Activated CD4-positive, alpha-beta T cell treated with anti-CD3 and anti-CD28 coated beads, Interleukin-2, amount 10 ng/mL, durations not matched to agents 7 days and 5 days (primary cell): ENCODE measurements at regions of chr9 and their contacts with region 1.

Region 1: GRCh38 chr9:5596173-5596572 is 32.7 kb upstream of the RIC1 start:
- DNase-seq: no peak
- H3K4me3 Mint-ChIP-seq: no peak overlapping the region
- H3K27ac Mint-ChIP-seq: no peak overlapping the region
- H3K4me1 Mint-ChIP-seq: peaks cover 24% of the 10 kb centered on the region
- H3K27me3 Mint-ChIP-seq: no peaks in the 10 kb centered on the region

Region 2: GRCh38 chr9:5582835-5583195 is 13.4 kb before region 1 on chr9:
- CTCF ChIA-PET with region 1: interaction called, 11 read pairs
- POLR2A ChIA-PET with region 1: no interaction called
- DNase-seq: peak; percentile 71
- H3K4me3 Mint-ChIP-seq: no peak overlapping the region
- H3K27ac Mint-ChIP-seq: peak overlapping the region; percentile 90
- H3K4me1 Mint-ChIP-seq: peaks cover 73% of the 10 kb centered on the region
- H3K27me3 Mint-ChIP-seq: no peaks in the 10 kb centered on the region